CD4-positive, alpha-beta memory T cell (primary cell): ENCODE measurements at regions of chr2 and their contacts with region 1.

Region 1: DNA sequence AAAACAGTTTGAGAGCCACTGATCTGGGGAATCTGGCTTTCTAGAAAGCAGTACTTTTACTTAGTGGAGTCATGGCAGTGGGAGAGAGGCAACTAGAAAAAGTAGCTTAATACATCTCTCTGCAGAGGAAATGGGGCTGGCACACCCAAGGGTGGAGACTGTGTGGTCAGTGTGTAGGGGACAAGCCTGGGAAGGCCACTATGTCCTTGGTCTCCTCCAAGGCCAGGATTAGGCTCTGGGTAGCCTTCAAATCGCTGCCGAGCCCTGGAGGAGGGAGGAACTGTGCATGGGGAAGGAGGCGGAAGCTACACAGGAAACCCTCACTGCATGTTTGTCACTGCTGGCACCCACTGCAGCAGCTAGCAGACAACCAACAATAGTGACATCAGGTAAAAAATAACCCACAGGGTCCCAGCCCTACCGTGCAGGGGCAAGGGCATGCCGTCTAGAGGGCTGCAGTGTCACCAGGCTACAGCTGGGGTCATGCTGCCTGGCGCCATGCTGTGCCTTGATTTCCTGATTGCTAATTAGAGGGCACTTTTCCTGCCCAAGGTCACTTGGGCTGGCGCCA is 34.8 kb downstream of the LBH start:
- DNase-seq: peak; percentile 68 to 89 (median 75)
- H3K4me3 ChIP-seq: peak overlapping the region; percentile 34 to 44
- H3K4me3 Mint-ChIP-seq: peak overlapping the region; percentile 86 to 96 (median 90)
- H3K27ac ChIP-seq: peak overlapping the region; percentile 66
- H3K27ac Mint-ChIP-seq: peak overlapping the region; percentile 92 to 99 (median 98)
- H3K4me1 ChIP-seq: peaks cover 70% of the 10 kb centered on the region
- H3K4me1 Mint-ChIP-seq: peaks cover 46 to 84% (median 72%) of the 10 kb centered on the region in 4 donors
- H3K27me3 ChIP-seq: no peaks in the 10 kb centered on the region
- H3K27me3 Mint-ChIP-seq: no peaks in the 10 kb centered on the region

Region 2: DNA sequence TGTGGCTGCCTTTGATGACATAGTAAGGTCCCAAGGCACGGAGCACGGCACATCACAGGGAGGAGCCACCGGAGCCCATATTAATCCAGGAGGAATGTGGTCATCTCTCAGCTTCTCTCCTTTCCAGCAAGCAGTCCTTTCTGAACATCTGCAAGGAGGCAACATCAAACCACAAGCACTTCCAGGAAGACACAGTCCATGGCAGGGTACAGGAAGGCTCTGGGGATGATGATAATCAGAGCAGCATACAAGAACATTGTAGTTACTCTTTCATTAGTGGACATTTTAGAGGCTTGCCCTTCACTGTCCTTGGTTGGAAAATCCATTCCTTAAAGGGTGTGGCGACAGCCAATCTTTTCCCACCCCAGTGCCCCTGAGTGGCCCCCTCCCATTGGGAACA is 88.2 kb before region 1 on chr2:
- CTCF ChIA-PET with region 1: no interaction called
- POLR2A ChIA-PET with region 1: no interaction called
- intact Hi-C with region 1: no loop called
- DNase-seq: no peak
- H3K4me3 ChIP-seq: no peak overlapping the region
- H3K4me3 Mint-ChIP-seq: no peak overlapping the region
- H3K27ac ChIP-seq: no peak overlapping the region
- H3K27ac Mint-ChIP-seq: peak overlapping the region in 1 of 7 donors; percentile 70
- H3K4me1 ChIP-seq: no peaks in the 10 kb centered on the region
- H3K4me1 Mint-ChIP-seq: peaks cover 0 to 7% (median 0%) of the 10 kb centered on the region in 4 donors
- H3K27me3 ChIP-seq: no peaks in the 10 kb centered on the region
- H3K27me3 Mint-ChIP-seq: peaks cover 0 to 4% of the 10 kb centered on the region in 2 donors

Region 3: DNA sequence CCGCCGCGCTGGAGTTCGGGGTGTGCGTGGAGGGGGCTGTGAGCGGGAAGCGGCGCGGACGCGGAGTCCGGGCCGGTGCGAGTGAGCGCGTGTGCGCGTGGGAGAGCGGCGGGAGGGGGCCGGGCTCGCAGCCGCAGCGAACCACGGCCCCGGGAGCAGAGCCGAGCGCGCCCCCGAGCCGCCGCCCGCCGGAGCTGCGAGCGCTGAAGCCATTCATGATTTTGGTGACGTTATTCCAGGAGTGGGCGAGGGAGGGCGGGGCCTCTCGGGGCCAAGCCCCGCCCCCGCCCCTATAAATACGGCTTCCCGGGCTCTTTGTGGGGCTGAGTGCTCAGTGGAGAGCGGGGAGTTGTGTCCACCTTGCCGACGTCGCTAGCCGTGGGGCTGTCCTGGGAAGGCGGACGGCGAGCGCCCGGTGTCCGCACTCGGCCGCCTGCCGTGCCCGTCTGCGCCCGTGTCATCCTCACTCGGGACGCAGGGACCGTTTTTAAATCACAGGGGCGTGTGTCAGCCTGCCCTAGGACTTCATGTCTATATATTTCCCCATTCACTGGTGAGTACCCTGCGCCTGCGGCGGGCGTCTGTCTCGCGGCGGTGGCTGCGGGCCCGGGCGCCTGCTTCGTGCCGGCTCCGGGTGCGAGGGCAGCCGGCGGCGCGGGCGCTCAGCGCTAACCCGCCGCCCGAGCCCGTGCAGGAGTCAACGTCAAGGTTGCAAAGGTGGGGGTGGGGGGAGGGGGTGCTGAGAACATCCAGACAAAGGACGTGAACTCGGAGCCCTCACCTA is 34.7 kb before region 1 on chr2 and contains the start of gene LBH:
- CTCF ChIA-PET with region 1: interaction called, 81 read pairs
- POLR2A ChIA-PET with region 1: interaction called, 435 read pairs
- intact Hi-C with region 1: loop called (anchors 1 kb)
- DNase-seq: peak; percentile 88 to 91 (median 89)
- H3K4me3 ChIP-seq: peak within 1 kb of the TSS; percentile 63 to 92
- H3K4me3 Mint-ChIP-seq: peak within 1 kb of the TSS; percentile 89 to 99 (median 96)
- H3K27ac ChIP-seq: peak within 1 kb of the TSS; percentile 93
- H3K27ac Mint-ChIP-seq: peak within 1 kb of the TSS; percentile 87 to 97 (median 91)
- H3K4me1 ChIP-seq: peaks cover 64% of the 10 kb centered on the region
- H3K4me1 Mint-ChIP-seq: peaks cover 36 to 76% (median 55%) of the 10 kb centered on the region in 4 donors
- H3K27me3 ChIP-seq: no peaks in the 10 kb centered on the region
- H3K27me3 Mint-ChIP-seq: no peaks in the 10 kb centered on the region
- total RNA-seq, gene LBH: 335 to 364 TPM

Region 4: GRCh38 chr2:30252723-30253701 is 13.1 kb before region 1 on chr2:
- CTCF ChIA-PET with region 1: interaction called, 8 read pairs
- POLR2A ChIA-PET with region 1: interaction called, 65 read pairs
- intact Hi-C with region 1: loop called (anchors 1 kb)
- DNase-seq: peak in 4 of 5 donors; percentile 13 to 85 (median 25)
- H3K4me3 ChIP-seq: peak overlapping the region in 1 of 2 donors; percentile 17
- H3K4me3 Mint-ChIP-seq: peak overlapping the region in 7 of 8 donors; percentile 59 to 83 (median 76)
- H3K27ac ChIP-seq: peak overlapping the region; percentile 37
- H3K27ac Mint-ChIP-seq: peak overlapping the region; percentile 72 to 97 (median 93)
- H3K4me1 ChIP-seq: peaks cover 98% of the 10 kb centered on the region
- H3K4me1 Mint-ChIP-seq: peaks cover 63 to 99% (median 89%) of the 10 kb centered on the region in 4 donors
- H3K27me3 ChIP-seq: no peaks in the 10 kb centered on the region
- H3K27me3 Mint-ChIP-seq: no peaks in the 10 kb centered on the region

Region 5: DNA sequence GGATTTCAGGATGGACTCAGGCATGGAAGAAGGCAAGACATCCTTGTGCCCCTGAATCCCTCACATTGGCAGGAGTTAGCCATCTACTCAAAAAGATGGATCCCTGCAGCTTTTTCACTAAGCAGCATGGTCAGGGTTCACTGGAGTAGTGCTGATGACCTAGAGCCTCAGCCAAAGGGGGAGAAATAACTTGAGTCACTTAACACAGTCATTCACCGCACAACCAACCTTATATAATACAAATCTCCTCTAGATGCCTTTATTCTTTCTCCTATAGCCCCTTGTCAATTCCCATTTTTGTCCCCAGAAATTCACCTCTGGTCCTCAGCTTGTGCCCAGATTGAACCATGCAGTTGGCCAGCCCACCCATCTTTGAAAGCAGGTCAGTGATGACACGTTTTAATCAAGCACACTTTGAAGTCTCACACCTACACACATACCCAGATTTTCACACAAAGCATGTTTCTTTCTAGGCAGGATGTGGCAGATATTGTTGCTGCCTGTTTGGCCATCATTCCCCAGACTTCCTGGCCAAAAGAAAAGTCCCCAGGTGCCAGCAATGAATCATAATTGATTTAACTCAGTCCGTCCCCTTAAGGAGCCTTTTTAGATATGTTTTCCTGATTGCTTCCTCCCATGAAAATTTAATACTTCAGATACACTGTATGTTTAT is 49.4 kb after region 1 on chr2:
- CTCF ChIA-PET with region 1: no interaction called
- POLR2A ChIA-PET with region 1: interaction called, 20 read pairs
- intact Hi-C with region 1: no loop called
- DNase-seq: peak; percentile 25 to 56 (median 40)
- H3K4me3 ChIP-seq: peak overlapping the region in 1 of 2 donors; percentile 14
- H3K4me3 Mint-ChIP-seq: peak overlapping the region in 6 of 8 donors; percentile 43 to 82 (median 68)
- H3K27ac ChIP-seq: peak overlapping the region; percentile 16
- H3K27ac Mint-ChIP-seq: peak overlapping the region; percentile 69 to 94 (median 93)
- H3K4me1 ChIP-seq: peaks cover 31% of the 10 kb centered on the region
- H3K4me1 Mint-ChIP-seq: peaks cover 23 to 35% (median 29%) of the 10 kb centered on the region in 4 donors
- H3K27me3 ChIP-seq: no peaks in the 10 kb centered on the region
- H3K27me3 Mint-ChIP-seq: no peaks in the 10 kb centered on the region

Region 6: DNA sequence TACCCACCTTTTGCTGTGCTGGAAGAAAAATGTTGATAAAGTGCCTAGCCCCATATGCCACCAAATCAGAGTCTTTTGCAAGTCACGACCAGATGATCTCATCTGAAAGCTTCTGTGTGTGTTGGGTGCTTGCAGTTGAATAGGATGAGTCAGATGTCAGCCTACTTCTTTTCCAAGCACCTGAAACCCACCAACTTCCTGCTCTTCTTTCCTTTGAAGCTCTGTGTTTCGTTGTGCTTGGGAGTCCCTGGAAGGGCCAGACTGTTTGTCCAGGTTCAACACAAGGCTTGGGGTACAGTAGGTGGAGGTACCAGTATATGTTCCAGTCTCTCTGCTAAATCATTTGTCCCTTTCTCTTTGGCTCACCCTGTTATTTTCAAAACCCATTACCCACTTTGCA is 144.1 kb after region 1 on chr2:
- CTCF ChIA-PET with region 1: no interaction called
- POLR2A ChIA-PET with region 1: no interaction called
- intact Hi-C with region 1: no loop called
- DNase-seq: no peak
- H3K4me3 ChIP-seq: no peak overlapping the region
- H3K4me3 Mint-ChIP-seq: no peak overlapping the region
- H3K27ac ChIP-seq: no peak overlapping the region
- H3K27ac Mint-ChIP-seq: peak overlapping the region in 5 of 7 donors; percentile 18 to 71 (median 37)
- H3K4me1 ChIP-seq: no peaks in the 10 kb centered on the region
- H3K4me1 Mint-ChIP-seq: peaks cover 10 to 21% (median 16%) of the 10 kb centered on the region in 4 donors
- H3K27me3 ChIP-seq: no peaks in the 10 kb centered on the region
- H3K27me3 Mint-ChIP-seq: no peaks in the 10 kb centered on the region

Region 7: GRCh38 chr2:30447149-30448045 is 181.3 kb after region 1 on chr2 and contains the start of gene LCLAT1:
- CTCF ChIA-PET with region 1: interaction called, 8 read pairs
- POLR2A ChIA-PET with region 1: interaction called, 19 read pairs
- intact Hi-C with region 1: loop called (anchors 1 kb)
- DNase-seq: peak; percentile 87 to 88 (median 88)
- H3K4me3 ChIP-seq: peak within 1 kb of the TSS; percentile 48 to 96
- H3K4me3 Mint-ChIP-seq: peak within 1 kb of the TSS; percentile 95 to 99 (median 96)
- H3K27ac ChIP-seq: peak within 1 kb of the TSS; percentile 83
- H3K27ac Mint-ChIP-seq: peak within 1 kb of the TSS; percentile 89 to 99 (median 98)
- H3K4me1 ChIP-seq: peaks cover 27% of the 10 kb centered on the region
- H3K4me1 Mint-ChIP-seq: peaks cover 23 to 40% (median 30%) of the 10 kb centered on the region in 4 donors
- H3K27me3 ChIP-seq: no peaks in the 10 kb centered on the region
- H3K27me3 Mint-ChIP-seq: peaks cover 0 to 1% of the 10 kb centered on the region in 2 donors
- total RNA-seq, gene LCLAT1: 11.5 to 14.1 TPM